ENCODE measurements at regions of chr1 and their contacts with region 1.

Region 1: DNA sequence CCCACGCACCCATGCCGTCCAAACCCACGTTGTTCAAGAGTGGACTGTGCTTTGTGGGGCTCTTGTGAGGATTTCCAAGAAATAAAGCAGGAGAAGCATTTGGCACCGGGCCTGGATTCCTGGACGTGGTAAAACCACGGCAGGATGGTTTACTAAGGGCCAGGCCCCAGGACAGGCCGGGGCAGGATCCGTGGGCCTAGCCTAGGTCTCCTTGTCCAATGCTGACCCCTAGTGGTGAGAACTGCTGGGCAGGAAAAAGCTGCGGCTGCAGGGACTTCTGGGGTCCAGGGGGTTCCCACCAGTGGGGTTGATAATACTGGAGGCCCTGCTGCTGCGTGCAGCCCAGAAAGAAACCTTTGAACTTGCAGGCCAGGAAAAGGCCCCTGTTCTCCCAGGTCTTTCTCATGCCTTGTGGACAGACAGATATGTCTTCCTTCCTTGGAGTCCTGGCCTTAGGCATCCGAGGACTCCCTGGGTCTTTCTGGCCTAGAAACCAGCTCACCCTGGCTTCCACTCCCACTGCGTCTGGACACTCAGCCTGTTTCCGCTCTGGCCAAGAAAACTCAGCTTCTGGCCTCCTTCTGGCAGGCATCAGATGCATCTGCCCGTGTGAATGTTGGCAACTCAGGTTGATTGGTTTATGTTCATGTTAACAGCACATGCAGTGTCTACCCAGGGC is 106.9 kb upstream of the TMEM51 start:
- DNase-seq: peak; percentile 38
- H3K4me3 ChIP-seq: no peak overlapping the region
- CTCF ChIP-seq: peak; percentile 88

Region 2: DNA sequence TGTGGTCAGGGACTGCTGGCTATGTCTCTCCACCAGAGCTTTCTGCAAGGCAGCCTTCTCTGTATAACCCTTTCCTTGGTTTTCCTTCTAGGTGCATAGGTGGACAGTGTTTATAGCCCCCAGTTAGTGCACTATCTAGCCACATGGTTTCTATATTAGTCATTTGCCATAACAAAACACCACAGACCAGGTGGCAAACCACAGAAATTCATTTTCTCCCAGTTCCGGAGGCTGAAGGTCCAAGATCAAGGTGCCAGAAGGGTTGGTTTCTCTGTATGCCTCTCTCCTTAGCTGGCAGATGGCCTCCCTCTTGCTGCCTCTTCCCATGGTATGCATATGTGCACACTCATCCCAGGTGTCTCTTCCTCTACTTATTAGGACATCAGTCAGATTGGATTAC is 341.8 kb before region 1 on chr1:
- CTCF ChIA-PET with region 1: no interaction called
- POLR2A ChIA-PET with region 1: no interaction called
- DNase-seq: no peak
- H3K4me3 ChIP-seq: no peak overlapping the region
- CTCF ChIP-seq: no peak

Region 3: DNA sequence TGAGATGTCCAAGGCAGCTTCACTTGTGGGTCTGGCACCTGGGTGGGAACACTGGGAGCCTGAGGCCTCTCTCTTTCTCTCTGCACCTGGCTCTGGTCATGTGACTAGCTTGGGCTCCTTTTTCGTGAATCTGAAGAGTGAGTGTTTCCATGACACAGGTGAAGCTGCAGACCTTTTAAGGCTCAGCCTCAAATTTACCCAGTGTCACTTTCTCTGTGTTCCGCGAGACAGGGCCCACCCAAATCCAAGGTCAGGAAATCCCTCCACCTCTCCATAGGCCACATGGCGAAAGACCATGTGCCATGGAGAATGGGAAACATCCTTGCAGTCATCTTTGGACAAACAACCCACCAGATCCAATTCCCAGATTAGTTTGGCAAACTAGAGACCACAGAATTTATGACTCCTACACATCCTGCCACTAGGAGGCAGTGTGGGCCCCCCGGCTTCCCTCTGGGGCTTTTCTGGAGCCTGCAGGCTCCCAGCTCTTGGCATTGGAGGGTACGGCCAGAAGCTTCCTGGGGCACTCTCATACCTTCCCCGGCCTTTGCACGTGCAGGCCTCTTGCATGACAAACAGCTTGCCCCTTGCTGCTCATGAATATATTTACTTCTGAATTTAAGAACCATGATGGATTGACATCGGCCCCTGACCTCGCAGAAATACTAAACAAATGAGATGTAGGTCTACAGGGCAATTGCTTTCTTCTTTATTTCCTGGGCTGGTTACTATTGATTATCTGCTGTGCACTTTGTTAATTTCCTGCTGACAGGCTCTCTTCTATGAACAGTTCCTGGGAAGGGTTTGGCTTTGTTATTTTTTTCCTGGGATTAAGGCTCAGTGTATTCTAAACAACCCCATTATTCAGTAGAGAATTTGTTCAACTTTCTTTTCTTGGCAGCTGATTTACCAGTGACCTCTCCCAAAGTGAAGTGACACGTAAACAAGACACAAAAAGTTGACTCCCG is 267.4 kb before region 1 on chr1:
- CTCF ChIA-PET with region 1: interaction called, 32 read pairs
- POLR2A ChIA-PET with region 1: no interaction called
- DNase-seq: no peak
- H3K4me3 ChIP-seq: no peak overlapping the region
- CTCF ChIP-seq: peak; percentile 65

Region 4: GRCh38 chr1:15056515-15057285 is 10.1 kb after region 1 on chr1:
- CTCF ChIA-PET with region 1: interaction called, 29 read pairs
- POLR2A ChIA-PET with region 1: no interaction called
- DNase-seq: peak; percentile 10
- H3K4me3 ChIP-seq: no peak overlapping the region
- CTCF ChIP-seq: no peak